ENCODE measurements at regions of chr16 and their contacts with region 1.

Region 1: GRCh38 chr16:47460711-47461597 is at the starts of genes ITFG1 and PHKB:
- DNase-seq: peak; percentile 56 to 94
- ATAC-seq: peak; percentile 83 to 90
- H3K4me3 ChIP-seq: peak within 1 kb of the TSS; percentile 80
- H3K27ac ChIP-seq: peak within 1 kb of the TSS; percentile 94 to 97
- H3K4me1 ChIP-seq: peaks cover 17% of the 10 kb centered on the region
- CTCF ChIP-seq: no peak
- EP300 ChIP-seq: no peak
- POLR2A ChIP-seq: peak; percentile 66
- RAD21 ChIP-seq: 0 out of 5 replicates have a peak, but pooled peaks have one; percentile 6 to 12
- polyA plus RNA-seq, gene ITFG1: 112 and 124 TPM in 2 replicates
- polyA plus RNA-seq, gene PHKB: 81.1 and 96.8 TPM in 2 replicates

Region 2: GRCh38 chr16:47916266-47916665 is 455.3 kb after region 1 on chr16:
- CTCF ChIA-PET with region 1: no interaction called
- POLR2A ChIA-PET with region 1: interaction called, 13 read pairs
- DNase-seq: no peak
- ATAC-seq: no peak
- H3K4me3 ChIP-seq: no peak overlapping the region
- H3K27ac ChIP-seq: no peak overlapping the region
- H3K4me1 ChIP-seq: peaks cover 12% of the 10 kb centered on the region
- CTCF ChIP-seq: no peak
- EP300 ChIP-seq: no peak
- POLR2A ChIP-seq: no peak
- RAD21 ChIP-seq: no peak

Measured in A549 (cell line).